OCI-LY7 (cell line): ENCODE measurements at regions of chr6 and their contacts with region 1.

Region 1: DNA sequence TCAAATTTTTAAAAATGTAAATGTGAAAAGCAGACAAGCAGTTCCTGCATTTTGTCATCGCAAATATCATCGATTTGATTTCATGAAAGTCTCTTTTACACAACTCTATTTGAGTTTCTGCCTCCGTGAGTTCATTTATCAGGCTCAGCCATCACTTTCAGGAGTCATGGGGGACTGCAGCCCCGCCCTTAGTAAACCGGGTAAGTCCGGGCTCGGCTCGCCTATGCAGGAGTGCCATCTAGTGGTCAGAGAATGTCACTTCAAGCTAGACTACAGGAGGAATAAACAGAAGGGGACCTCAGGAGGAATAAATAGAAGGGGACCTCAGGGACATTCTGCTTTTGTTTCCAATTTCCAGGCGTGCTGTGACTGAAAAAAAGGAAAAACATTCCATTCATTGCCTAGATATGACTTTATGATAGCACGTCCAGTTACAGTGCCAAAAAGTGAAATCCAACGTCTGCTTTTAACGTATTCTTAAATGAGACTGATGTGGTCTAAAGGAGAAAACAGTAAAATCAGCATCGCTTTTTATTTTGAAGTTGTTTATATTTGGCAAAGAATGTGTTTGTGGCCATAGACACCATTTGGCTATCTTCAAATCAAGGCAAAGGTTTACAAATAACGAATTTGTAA is 333.9 kb downstream of the HACE1 start:
- DNase-seq: peak; percentile 84
- H3K4me3 ChIP-seq: no peak overlapping the region
- H3K27ac ChIP-seq: no peak overlapping the region
- H3K4me1 ChIP-seq: no peaks in the 10 kb centered on the region
- CTCF ChIP-seq: peak; percentile 99

Region 2: DNA sequence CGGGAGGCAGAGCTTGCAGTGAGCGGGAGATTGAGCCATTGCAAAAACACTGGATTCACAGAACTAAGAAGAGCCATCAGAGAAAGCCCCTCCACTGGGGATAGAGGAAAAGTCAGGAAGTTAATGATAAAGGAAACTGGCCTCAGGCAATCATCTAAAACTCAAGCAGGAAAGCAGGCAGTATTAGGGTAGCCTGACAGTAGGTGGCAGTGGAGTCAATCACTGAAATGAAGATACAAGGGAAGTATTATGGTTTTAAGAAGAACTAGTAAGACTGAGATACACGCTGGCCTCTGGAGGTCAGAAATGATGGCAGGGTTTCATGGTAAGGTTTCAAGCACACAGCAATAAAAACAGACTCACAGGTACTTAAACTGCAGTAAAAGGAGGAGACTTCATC is 244.4 kb before region 1 on chr6:
- CTCF ChIA-PET with region 1: no interaction called
- POLR2A ChIA-PET with region 1: no interaction called
- intact Hi-C with region 1: loop called (anchors 5 kb)
- DNase-seq: peak; percentile 4
- H3K4me3 ChIP-seq: no peak overlapping the region
- H3K27ac ChIP-seq: no peak overlapping the region
- H3K4me1 ChIP-seq: no peaks in the 10 kb centered on the region
- CTCF ChIP-seq: peak; percentile 39; the same call in 1 of the 2 replicates

Region 3: GRCh38 chr6:104682722-104683643 is 157.2 kb after region 1 on chr6:
- CTCF ChIA-PET with region 1: interaction called, 3 read pairs
- POLR2A ChIA-PET with region 1: no interaction called
- intact Hi-C with region 1: loop called (anchors 5 kb)
- DNase-seq: peak; percentile 63
- H3K4me3 ChIP-seq: no peak overlapping the region
- H3K27ac ChIP-seq: no peak overlapping the region
- H3K4me1 ChIP-seq: peaks cover 21% of the 10 kb centered on the region
- CTCF ChIP-seq: peak; percentile 99

Region 4: GRCh38 chr6:105077596-105078385 is 552.0 kb after region 1 on chr6:
- CTCF ChIA-PET with region 1: no interaction called
- POLR2A ChIA-PET with region 1: no interaction called
- intact Hi-C with region 1: loop called (anchors 5 kb)
- DNase-seq: peak; percentile 35
- H3K4me3 ChIP-seq: no peak overlapping the region
- H3K27ac ChIP-seq: no peak overlapping the region
- H3K4me1 ChIP-seq: no peaks in the 10 kb centered on the region
- CTCF ChIP-seq: peak; percentile 84